ENCODE measurements at regions of chr12 and their contacts with region 1.

Region 1: GRCh38 chr12:6723607-6724396 is at the start of gene COPS7A:
- DNase-seq: peak; percentile 98
- ATAC-seq: peak; percentile 99
- H3K4me3 ChIP-seq: peak within 1 kb of the TSS; percentile 51
- H3K27ac ChIP-seq: peak within 1 kb of the TSS; percentile 71
- H3K4me1 ChIP-seq: 0 out of 2 replicates have a peak, but pooled peaks cover 2% of the 10 kb centered on the region
- H3K27me3 ChIP-seq: no peaks in the 10 kb centered on the region
- CTCF ChIP-seq: no peak
- POLR2A ChIP-seq: peak; percentile 84
- RAD21 ChIP-seq: no peak
- total RNA-seq, gene COPS7A: 51.4 and 58.8 TPM in 2 replicates

Region 2: GRCh38 chr12:6745741-6746525 is 22.1 kb after region 1 on chr12:
- CTCF ChIA-PET with region 1: no interaction called
- POLR2A ChIA-PET with region 1: interaction called, 18 read pairs
- dilution Hi-C with region 1: no loop called
- in situ Hi-C with region 1: no loop called
- intact Hi-C with region 1: no loop called
- DNase-seq: no peak
- ATAC-seq: peak; percentile 24
- H3K4me3 ChIP-seq: no peak overlapping the region
- H3K27ac ChIP-seq: no peak overlapping the region
- H3K4me1 ChIP-seq: no peaks in the 10 kb centered on the region
- H3K27me3 ChIP-seq: no peaks in the 10 kb centered on the region
- CTCF ChIP-seq: no peak
- POLR2A ChIP-seq: no peak
- RAD21 ChIP-seq: no peak

Region 3: DNA sequence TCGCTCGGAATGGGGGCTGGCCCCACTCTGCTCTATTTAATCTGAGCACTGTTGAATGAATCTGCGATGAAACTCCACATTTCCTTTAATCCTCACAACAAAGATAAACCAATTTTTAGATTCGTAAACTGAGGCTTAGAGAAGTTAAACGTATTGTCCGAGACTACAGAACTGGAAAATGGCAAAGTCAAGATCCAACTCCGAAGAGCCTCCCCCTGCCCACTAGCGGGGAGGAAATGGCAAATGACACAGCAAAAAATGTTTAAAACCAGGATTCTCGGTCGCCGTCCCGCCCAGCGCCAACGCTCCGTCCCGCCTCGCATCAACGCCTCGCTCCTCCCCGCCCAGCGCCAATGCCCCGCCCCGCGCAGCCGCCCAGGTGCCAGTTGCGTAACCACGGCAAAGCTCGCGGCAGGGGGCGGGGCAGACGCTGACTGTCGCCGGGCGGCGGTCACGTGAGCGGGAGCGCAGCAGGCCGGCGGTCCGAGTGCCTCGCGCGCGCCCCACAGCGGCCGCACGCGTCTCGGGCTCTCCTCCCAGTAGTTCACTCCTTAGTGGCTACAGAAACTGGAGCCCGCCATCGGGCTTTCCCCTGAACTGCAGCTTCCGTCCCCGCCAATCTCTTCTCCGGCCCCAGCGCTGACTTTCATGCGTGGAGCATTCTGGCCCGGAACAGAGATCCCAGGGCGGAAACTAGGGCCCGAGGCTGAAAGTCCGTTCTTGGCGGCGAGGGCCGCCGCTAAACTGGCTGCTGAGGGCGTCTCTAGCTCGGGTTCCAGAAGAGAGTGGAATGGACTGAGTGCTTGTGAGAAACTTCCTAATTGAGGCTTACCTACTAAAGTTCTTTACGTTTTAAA is 167.2 kb after region 1 on chr12:
- CTCF ChIA-PET with region 1: no interaction called
- POLR2A ChIA-PET with region 1: no interaction called
- dilution Hi-C with region 1: no loop called
- in situ Hi-C with region 1: no loop called
- intact Hi-C with region 1: no loop called
- DNase-seq: peak; percentile 94
- ATAC-seq: peak; percentile 97
- H3K4me3 ChIP-seq: peak overlapping the region; percentile 39
- H3K27ac ChIP-seq: peak overlapping the region; percentile 90
- H3K4me1 ChIP-seq: peaks cover 2% of the 10 kb centered on the region; the same call in 1 of the 2 replicates
- H3K27me3 ChIP-seq: no peaks in the 10 kb centered on the region
- CTCF ChIP-seq: peak; percentile 96
- POLR2A ChIP-seq: peak; percentile 92
- RAD21 ChIP-seq: peak; percentile 53

Measured in IMR-90 (cell line).